Mucosa of descending colon (tissue), 3 donors: ENCODE measurements at regions of chr7 and their contacts with region 1.

Region 1: GRCh38 chr7:33757562-33758165 is 147.7 kb upstream of the BMPER start:
- DNase-seq: peak in 1 of 3 donors; percentile 75
- ATAC-seq: no peak
- H3K4me3 ChIP-seq: no peak overlapping the region
- H3K4me1 ChIP-seq: peaks cover 20% of the 10 kb centered on the region
- CTCF ChIP-seq: no peak

Region 2: DNA sequence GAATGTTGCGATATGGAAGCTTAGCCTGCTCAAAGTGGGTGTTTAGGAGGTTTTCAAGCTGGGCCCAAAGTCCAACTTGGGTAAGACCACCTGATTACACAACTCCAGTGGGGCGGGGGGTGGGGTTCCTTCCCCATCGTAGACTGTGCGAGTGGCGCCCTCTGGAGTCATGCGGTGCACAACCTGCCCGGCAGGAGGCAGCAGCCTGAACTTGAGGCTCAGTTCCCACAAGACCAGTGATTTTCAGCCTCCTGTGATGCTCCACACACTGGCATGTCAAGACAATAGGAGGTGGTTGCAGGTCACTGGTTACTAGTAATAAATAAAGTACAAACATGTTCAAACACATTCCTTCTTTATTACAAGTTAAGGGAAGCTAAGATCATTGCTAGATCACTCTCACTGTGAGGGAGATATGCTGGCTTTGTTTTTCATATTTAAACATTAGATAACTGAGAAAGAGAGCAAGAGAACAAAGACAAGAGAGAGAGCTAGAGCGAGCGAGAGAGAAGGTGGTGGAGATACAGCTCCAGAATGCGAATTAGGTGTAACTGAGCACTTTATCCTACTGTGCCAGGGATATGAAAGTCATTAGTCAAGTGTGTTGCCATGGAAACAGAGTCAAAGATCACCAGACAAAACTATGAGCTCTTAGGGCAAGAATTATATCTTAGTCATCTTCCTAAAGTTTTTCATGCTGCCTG is 50.3 kb after region 1 on chr7:
- intact Hi-C with region 1: no loop called
- DNase-seq: peak in 2 of 3 donors; percentile 35 to 38
- ATAC-seq: peak; percentile 50
- H3K4me3 ChIP-seq: no peak overlapping the region
- H3K4me1 ChIP-seq: no peaks in the 10 kb centered on the region
- CTCF ChIP-seq: peak; percentile 20

Region 3: GRCh38 chr7:33895025-33895804 is 137.6 kb after region 1 on chr7:
- intact Hi-C with region 1: loop called (anchors 10 kb)
- DNase-seq: peak; percentile 79 to 92 (median 89)
- ATAC-seq: peak; percentile 95
- H3K4me3 ChIP-seq: no peak overlapping the region
- H3K4me1 ChIP-seq: no peaks in the 10 kb centered on the region
- CTCF ChIP-seq: peak; percentile 88

Region 4: DNA sequence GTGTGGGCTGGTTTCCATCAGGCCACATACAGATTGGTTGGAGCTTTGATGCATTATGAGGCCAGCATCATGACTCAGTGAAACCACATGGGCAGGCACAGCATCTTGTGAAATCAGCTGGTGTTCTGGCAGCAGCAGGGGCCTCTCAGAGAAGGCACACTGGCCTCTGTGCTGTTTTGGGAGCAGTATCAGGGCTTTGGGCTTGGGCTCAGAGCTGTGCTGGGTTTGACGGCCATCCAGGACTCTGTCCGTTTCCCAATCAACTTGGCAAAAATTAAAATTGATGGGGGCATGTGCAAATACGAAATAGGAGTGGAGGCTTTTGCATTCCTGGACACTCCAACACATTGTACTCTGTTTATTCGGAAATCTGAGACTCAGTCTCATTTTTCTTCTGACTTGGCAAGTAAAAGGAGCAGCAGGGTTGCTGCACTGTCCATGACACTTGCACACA is 338.6 kb after region 1 on chr7:
- intact Hi-C with region 1: no loop called
- DNase-seq: peak; percentile 27 to 64 (median 36)
- ATAC-seq: peak; percentile 60
- H3K4me3 ChIP-seq: no peak overlapping the region
- H3K4me1 ChIP-seq: no peaks in the 10 kb centered on the region
- CTCF ChIP-seq: no peak